PC-3 (cell line): ENCODE measurements at regions of chr12 and their contacts with region 1.

Region 1: DNA sequence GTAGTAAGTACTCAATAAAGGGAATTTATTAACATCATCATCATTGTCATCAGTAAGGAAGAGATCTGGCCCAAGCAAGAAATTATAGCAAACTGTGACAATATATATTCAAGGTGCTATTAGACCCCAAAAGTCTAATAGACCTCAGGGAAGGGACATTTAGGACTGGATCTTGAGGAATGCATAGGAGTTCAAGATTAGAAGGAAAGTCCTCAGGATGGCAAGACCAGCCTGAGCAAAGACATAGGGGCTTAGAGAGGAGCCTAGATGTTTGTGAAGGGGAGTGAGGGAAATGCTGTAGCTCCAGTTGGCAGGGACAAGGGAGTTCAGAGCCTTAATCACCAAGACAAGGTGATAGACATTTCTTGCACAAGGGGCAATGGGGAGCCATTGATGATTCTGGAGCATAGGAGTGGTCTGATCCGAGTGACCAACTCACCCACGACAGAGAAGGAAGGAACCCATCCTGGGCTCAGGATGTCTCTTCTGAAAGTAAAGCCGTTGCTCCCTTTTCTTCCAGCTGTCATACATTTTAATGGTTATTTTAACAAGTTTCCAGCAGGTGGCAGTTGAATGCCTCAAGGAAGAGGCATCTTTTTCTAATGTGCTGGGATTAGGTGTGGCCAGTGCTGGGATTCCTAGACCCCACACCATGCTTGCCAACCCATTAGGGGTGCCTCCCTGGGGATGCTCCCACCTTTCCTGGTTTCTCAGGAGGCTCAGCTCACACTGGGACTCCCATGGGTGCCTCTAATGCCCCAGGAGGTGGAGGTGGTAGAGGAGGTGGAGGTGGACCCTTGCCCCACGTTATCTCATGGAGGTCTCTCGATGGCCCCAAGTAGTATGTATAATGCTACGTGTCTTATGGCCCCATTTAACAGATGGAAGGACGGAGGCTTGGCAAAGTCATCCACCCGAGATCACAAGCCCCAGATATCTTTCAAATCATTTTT is 37.8 kb downstream of the PHETA1 start:
- DNase-seq: peak; percentile 83
- ATAC-seq: peak; percentile 78
- H3K4me3 ChIP-seq: no peak overlapping the region
- H3K27ac ChIP-seq: no peak overlapping the region
- H3K4me1 ChIP-seq: no peaks in the 10 kb centered on the region
- H3K27me3 ChIP-seq: no peaks in the 10 kb centered on the region; the same call in 1 of the 2 replicates
- CTCF ChIP-seq: peak; percentile 78

Region 2: GRCh38 chr12:111242184-111242583 is 88.9 kb before region 1 on chr12:
- CTCF ChIA-PET with region 1: no interaction called
- POLR2A ChIA-PET with region 1: no interaction called
- intact Hi-C with region 1: no loop called
- DNase-seq: no peak
- ATAC-seq: no peak
- H3K4me3 ChIP-seq: no peak overlapping the region
- H3K27ac ChIP-seq: no peak overlapping the region
- H3K4me1 ChIP-seq: no peaks in the 10 kb centered on the region
- H3K27me3 ChIP-seq: peaks cover 34% of the 10 kb centered on the region
- CTCF ChIP-seq: no peak

Region 3: GRCh38 chr12:111368788-111369495 is 37.9 kb after region 1 on chr12 and contains the start of gene PHETA1:
- CTCF ChIA-PET with region 1: no interaction called
- POLR2A ChIA-PET with region 1: no interaction called
- intact Hi-C with region 1: loop called (anchors 1 kb)
- DNase-seq: peak; percentile 88
- ATAC-seq: peak; percentile 95
- H3K4me3 ChIP-seq: peak within 1 kb of the TSS; percentile 81
- H3K27ac ChIP-seq: no peak within 1 kb of the TSS
- H3K4me1 ChIP-seq: peaks cover 12% of the 10 kb centered on the region
- H3K27me3 ChIP-seq: no peaks in the 10 kb centered on the region
- CTCF ChIP-seq: no peak
- total RNA-seq, gene PHETA1: 18.6 and 22.8 TPM in 2 replicates

Region 4: DNA sequence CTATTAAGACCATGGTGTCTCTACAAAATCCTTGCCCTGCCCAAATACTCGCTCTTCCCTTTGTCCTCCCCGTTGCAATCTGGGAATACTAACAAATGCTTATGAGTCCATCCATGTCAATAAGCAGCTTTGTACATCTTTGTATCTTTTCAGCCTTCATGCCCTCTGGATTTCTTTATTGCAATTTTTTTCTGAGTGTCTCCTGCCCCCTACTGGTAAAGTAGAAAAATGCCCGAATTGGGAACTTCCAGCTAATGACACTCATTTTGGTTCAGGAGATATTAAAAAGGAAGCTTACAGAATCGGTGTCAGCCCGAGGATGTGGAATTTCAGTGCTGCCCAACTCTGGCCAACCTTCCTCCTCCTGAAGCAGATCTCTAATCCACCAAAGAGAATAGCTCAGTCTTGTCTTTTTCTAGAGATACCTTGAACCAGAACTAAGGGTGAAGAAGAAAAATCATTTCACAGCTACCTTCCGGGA is 120.6 kb after region 1 on chr12:
- CTCF ChIA-PET with region 1: interaction called, 19 read pairs
- POLR2A ChIA-PET with region 1: interaction called, 3 read pairs
- intact Hi-C with region 1: loop called (anchors 1 kb)
- DNase-seq: peak; percentile 72
- ATAC-seq: peak; percentile 47
- H3K4me3 ChIP-seq: no peak overlapping the region
- H3K27ac ChIP-seq: no peak overlapping the region
- H3K4me1 ChIP-seq: no peaks in the 10 kb centered on the region
- H3K27me3 ChIP-seq: no peaks in the 10 kb centered on the region
- CTCF ChIP-seq: peak; percentile 97